Endothelial cell of umbilical vein (primary cell): ENCODE measurements at regions of chr17 and their contacts with region 1.

Region 1: GRCh38 chr17:76264755-76265596 is at the start of gene UBALD2:
- DNase-seq: peak; percentile 100
- H3K4me3 ChIP-seq: peak within 1 kb of the TSS; percentile 78 to 84 (median 80)
- H3K27ac ChIP-seq: peak within 1 kb of the TSS; percentile 97
- H3K4me1 ChIP-seq: peaks cover 54% of the 10 kb centered on the region
- H3K27me3 ChIP-seq: no peaks in the 10 kb centered on the region
- CTCF ChIP-seq: no peak
- POLR2A ChIP-seq: peak; percentile 42
- total RNA-seq, gene UBALD2: 70.9 and 75.2 TPM in 2 replicates

Region 2: GRCh38 chr17:76240461-76241203 is 24.3 kb before region 1 on chr17 and contains the start of gene RNF157:
- CTCF ChIA-PET with region 1: interaction called, 3 read pairs
- POLR2A ChIA-PET with region 1: interaction called, 3 read pairs
- dilution Hi-C with region 1: no loop called
- intact Hi-C with region 1: loop called (anchors 2 kb)
- DNase-seq: peak; percentile 53
- H3K4me3 ChIP-seq: peak within 1 kb of the TSS; percentile 20 to 54 (median 37)
- H3K27ac ChIP-seq: no peak within 1 kb of the TSS
- H3K4me1 ChIP-seq: peaks cover 7% of the 10 kb centered on the region
- H3K27me3 ChIP-seq: peaks cover 46 to 53% of the 10 kb centered on the region in 2 experiments
- CTCF ChIP-seq: no peak
- POLR2A ChIP-seq: no peak
- total RNA-seq, gene RNF157: 0.48 and 0.86 TPM in 2 replicates

Region 3: GRCh38 chr17:76246080-76247066 is 18.6 kb before region 1 on chr17:
- CTCF ChIA-PET with region 1: interaction called, 10 read pairs
- POLR2A ChIA-PET with region 1: interaction called, 4 read pairs
- dilution Hi-C with region 1: no loop called
- intact Hi-C with region 1: loop called (anchors 2 kb)
- DNase-seq: no peak
- H3K4me3 ChIP-seq: no peak overlapping the region
- H3K27ac ChIP-seq: no peak overlapping the region
- H3K4me1 ChIP-seq: no peaks in the 10 kb centered on the region
- H3K27me3 ChIP-seq: peaks cover 27 to 29% of the 10 kb centered on the region in 2 experiments
- CTCF ChIP-seq: no peak
- POLR2A ChIP-seq: no peak